ENCODE measurements at regions of chr17 and their contacts with region 1.

Region 1: DNA sequence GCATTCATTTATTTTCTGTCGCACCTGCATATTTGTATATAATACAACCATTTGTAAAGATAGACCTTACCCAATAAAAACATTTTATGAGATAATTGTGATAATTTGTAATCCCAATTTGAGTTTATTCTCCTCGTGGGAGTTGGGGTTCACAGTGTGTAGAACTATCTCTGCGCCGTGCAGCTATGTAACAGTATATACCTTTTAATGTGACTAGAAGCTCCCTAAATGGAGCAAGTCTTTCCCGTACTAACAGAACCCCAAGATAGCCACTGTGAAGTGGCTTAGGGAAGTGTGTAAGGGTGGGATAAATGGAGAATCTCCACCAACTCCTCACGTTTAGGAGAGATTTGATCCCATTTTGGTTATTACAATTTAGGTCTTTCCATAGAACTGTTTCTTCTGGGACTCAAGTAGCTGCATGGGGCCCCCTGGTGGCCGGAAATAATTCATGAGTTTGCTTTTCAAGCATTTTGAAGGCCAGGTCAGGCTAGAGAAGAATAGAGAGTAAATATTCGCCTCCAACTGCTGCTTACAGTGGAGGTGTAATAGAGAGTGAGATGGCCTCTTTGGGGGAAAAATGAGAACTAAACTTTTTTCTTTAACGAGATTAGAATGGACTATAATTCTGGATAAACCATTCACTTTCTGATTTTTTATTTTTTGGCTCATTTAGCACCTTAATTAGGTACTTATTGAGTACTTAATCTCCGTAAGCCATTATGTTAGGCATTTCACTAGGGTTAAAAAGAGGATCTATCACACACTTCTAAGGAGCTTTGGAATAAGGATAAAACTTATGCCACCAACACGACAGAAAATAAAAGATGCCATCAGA is 4.5 kb downstream of the TMEM100 start:
- DNase-seq: peak; percentile 81 to 97 (median 90)
- H3K4me3 ChIP-seq: no peak overlapping the region
- H3K27ac ChIP-seq: no peak overlapping the region
- H3K4me1 ChIP-seq: no peaks in the 10 kb centered on the region
- H3K27me3 ChIP-seq: no peaks in the 10 kb centered on the region
- CTCF ChIP-seq: peak; percentile 68 to 93 (median 79)
- POLR2A ChIP-seq: no peak

Region 2: GRCh38 chr17:55536205-55536604 is 181.9 kb before region 1 on chr17:
- intact Hi-C with region 1: no loop called
- DNase-seq: no peak
- H3K4me3 ChIP-seq: no peak overlapping the region
- H3K27ac ChIP-seq: no peak overlapping the region
- H3K4me1 ChIP-seq: no peaks in the 10 kb centered on the region
- H3K27me3 ChIP-seq: no peaks in the 10 kb centered on the region
- CTCF ChIP-seq: no peak
- POLR2A ChIP-seq: no peak

Region 3: GRCh38 chr17:55770148-55770870 is 52.2 kb after region 1 on chr17:
- intact Hi-C with region 1: loop called in 1 of 2 experiments (anchors 5 kb)
- DNase-seq: no peak
- H3K4me3 ChIP-seq: no peak overlapping the region
- H3K27ac ChIP-seq: peak overlapping the region in 2 of 5 donors; percentile 28 to 58
- H3K4me1 ChIP-seq: peaks cover 0 to 12% of the 10 kb centered on the region in 2 donors
- H3K27me3 ChIP-seq: no peaks in the 10 kb centered on the region
- CTCF ChIP-seq: peak; percentile 62 to 83 (median 68)
- POLR2A ChIP-seq: no peak

Region 4: DNA sequence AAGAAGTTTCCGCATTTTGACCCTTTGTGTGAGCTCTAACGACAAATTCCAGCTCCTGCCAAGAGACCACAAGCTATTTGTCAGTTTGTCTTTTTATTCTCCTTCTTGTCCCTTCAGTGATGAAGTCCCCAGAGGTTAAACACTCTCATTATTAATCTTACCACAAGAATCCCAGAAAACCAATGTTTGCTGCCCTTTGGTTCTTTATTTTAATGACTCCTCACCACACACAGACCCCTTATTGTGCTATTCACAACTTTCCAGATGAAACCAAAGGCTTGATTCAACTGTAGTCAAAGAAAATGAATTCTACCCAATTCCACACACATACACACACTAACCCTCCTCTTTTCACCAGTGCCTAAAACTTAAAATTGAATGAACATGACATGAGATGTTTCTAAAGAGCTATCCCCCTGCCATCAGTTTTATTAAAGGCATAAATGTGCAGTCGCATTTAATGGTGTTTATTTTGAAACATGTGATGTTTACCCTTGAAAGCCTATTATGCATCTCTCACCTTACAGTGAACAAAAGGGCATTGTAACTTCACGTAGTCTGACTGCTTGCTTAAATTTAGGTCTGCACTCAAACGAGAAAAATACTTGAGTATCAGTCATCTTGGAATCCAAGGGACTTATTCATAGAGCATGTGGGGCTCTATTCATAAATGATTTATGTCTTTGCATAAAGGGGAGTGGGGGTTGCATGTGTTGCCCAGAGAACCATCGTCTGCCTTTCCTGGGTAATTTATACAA is 76.8 kb after region 1 on chr17:
- intact Hi-C with region 1: no loop called
- DNase-seq: no peak
- H3K4me3 ChIP-seq: no peak overlapping the region
- H3K27ac ChIP-seq: no peak overlapping the region
- H3K4me1 ChIP-seq: no peaks in the 10 kb centered on the region
- H3K27me3 ChIP-seq: no peaks in the 10 kb centered on the region
- CTCF ChIP-seq: no peak
- POLR2A ChIP-seq: no peak

Measured in adrenal gland (tissue), 19 donors.